T-cell (primary cell): ENCODE measurements at regions of chr6 and their contacts with region 1.

Region 1: DNA sequence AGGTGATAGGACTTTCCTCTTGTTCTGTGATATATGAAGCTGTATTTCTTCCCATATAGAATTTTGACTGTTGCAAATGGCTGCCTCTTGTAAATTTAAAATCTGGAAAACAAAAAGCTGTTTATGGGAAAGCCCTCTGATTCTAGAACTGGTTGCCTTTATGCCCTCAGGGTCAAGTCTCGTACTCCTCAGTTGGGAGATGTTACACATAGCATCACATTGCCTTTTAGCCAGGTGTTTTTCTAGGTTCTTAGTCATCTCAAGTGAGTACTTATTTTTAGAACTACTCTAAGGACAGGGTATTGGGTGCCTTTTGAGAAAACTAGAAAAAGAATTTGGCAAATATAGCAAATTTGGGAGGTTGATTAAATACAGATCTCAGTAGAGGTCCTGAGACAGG is 58.5 kb downstream of the ANKS1A start:
- DNase-seq: no peak
- ATAC-seq: no peak
- H3K4me3 ChIP-seq: no peak overlapping the region
- H3K4me3 Mint-ChIP-seq: no peak overlapping the region
- H3K27ac ChIP-seq: no peak overlapping the region
- H3K27ac Mint-ChIP-seq: no peak overlapping the region
- H3K4me1 ChIP-seq: no peaks in the 10 kb centered on the region
- H3K4me1 Mint-ChIP-seq: peaks cover 6 to 22% (median 14%) of the 10 kb centered on the region in 3 donors
- H3K27me3 ChIP-seq: no peaks in the 10 kb centered on the region
- H3K27me3 Mint-ChIP-seq: no peaks in the 10 kb centered on the region

Region 2: DNA sequence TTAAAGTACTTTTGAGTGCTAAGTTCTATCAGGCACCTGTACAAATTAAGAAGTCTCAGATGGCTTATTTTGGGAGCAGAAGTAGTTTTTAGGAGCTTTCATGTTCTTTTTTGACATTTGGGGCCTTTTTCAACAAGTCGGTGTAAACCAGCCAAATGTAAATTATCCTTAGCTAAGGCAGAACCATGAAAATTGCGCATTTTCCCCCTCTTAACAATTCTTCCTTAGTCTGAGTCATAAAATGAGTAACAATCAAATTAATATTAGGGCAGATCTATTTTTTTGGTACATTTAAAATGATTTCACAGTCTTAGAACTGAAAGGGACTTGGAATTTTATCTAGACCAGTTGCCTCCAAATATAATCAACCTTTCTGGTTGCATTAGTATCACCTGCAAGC is 28.7 kb after region 1 on chr6:
- CTCF ChIA-PET with region 1: no interaction called
- POLR2A ChIA-PET with region 1: interaction called in 1 of 2 experiments, 11 read pairs
- DNase-seq: no peak
- ATAC-seq: no peak
- H3K4me3 ChIP-seq: no peak overlapping the region
- H3K4me3 Mint-ChIP-seq: no peak overlapping the region
- H3K27ac ChIP-seq: no peak overlapping the region
- H3K27ac Mint-ChIP-seq: no peak overlapping the region
- H3K4me1 ChIP-seq: no peaks in the 10 kb centered on the region
- H3K4me1 Mint-ChIP-seq: no peaks in the 10 kb centered on the region
- H3K27me3 ChIP-seq: no peaks in the 10 kb centered on the region
- H3K27me3 Mint-ChIP-seq: no peaks in the 10 kb centered on the region

Region 3: GRCh38 chr6:35240840-35241801 is 293.6 kb after region 1 on chr6:
- CTCF ChIA-PET with region 1: no interaction called
- POLR2A ChIA-PET with region 1: no interaction called
- DNase-seq: peak; percentile 12 to 79 (median 61)
- ATAC-seq: peak; percentile 82 to 90 (median 84)
- H3K4me3 ChIP-seq: no peak overlapping the region
- H3K4me3 Mint-ChIP-seq: no peak overlapping the region
- H3K27ac ChIP-seq: no peak overlapping the region
- H3K27ac Mint-ChIP-seq: no peak overlapping the region
- H3K4me1 ChIP-seq: peaks cover 0 to 2% of the 10 kb centered on the region in 2 experiments
- H3K4me1 Mint-ChIP-seq: peaks cover 2 to 11% (median 3%) of the 10 kb centered on the region in 3 donors
- H3K27me3 ChIP-seq: peaks cover 0 to 3% of the 10 kb centered on the region in 2 experiments
- H3K27me3 Mint-ChIP-seq: no peaks in the 10 kb centered on the region